Sigmoid colon (tissue), 7 donors: ENCODE measurements at regions of chrX and their contacts with region 1.

Region 1: GRCh38 chrX:40647307-40648197 is at the start of gene CXorf38:
- DNase-seq: peak; percentile 97
- H3K4me3 ChIP-seq: peak within 1 kb of the TSS; percentile 56 to 90 (median 78)
- H3K27ac ChIP-seq: peak within 1 kb of the TSS; percentile 82 to 89 (median 85)
- H3K4me1 ChIP-seq: peaks cover 0 to 46% (median 19%) of the 10 kb centered on the region in 4 donors
- H3K27me3 ChIP-seq: no peaks in the 10 kb centered on the region
- CTCF ChIP-seq: no peak
- EP300 ChIP-seq: peak in 1 of 4 donors; percentile 51
- POLR2A ChIP-seq: peak in 1 of 2 donors; percentile 40
- total RNA-seq, gene CXorf38: 9.2 to 11.4 (median 9.8) TPM

Region 2: GRCh38 chrX:40539214-40540142 is 108.1 kb before region 1 on chrX:
- intact Hi-C with region 1: loop called (anchors 10 kb)
- DNase-seq: peak; percentile 67
- H3K4me3 ChIP-seq: no peak overlapping the region
- H3K27ac ChIP-seq: peak overlapping the region in 1 of 4 donors; percentile 27
- H3K4me1 ChIP-seq: peaks cover 0 to 17% (median 5%) of the 10 kb centered on the region in 4 donors
- H3K27me3 ChIP-seq: no peaks in the 10 kb centered on the region
- CTCF ChIP-seq: no peak
- EP300 ChIP-seq: no peak
- POLR2A ChIP-seq: no peak

Region 3: DNA sequence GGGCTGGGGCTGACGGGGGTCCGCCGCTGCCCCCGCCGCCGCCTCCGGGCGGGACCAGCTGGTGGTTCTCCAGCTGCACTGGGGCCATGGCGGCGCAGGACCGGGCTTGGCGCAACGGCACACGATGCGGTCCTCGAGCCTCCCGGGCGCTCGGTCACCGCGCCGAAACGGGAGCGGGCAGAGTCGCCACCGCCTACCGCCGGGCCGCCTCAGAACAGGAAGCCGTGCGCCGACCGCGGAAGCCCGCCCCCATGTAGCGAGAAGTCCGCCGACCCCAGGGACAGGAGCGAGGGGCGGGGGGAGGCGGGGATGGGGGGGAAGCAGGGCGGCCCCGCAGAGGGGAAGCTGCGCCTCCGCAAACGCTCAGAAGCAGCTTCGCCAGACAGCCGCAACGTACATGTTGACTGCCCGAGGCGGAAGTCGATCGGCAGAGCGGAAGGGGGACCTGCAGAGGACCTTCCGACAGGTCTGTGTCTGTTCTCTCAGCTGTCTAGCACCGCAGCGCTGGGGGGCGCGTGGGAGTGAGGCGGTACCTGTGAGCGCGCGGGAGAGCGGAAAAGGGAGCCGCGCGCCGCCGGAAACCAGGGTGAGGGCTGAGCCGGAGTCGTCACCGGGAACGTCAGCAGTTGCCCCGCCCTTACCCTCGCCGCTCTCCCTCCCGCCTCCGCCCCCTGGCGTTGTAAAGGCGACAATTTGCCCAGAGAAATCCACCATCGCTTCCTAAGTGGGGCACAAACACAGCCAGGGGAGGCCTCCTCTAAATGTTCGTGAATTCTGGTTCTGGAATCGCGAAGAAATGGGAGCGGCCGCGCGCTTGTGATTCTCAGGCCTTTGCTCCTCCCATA is 88.0 kb after region 1 on chrX and contains the start of gene MED14:
- intact Hi-C with region 1: loop called (anchors 5 kb)
- DNase-seq: peak; percentile 92
- H3K4me3 ChIP-seq: peak within 1 kb of the TSS; percentile 70 to 87 (median 78)
- H3K27ac ChIP-seq: peak within 1 kb of the TSS; percentile 92 to 98 (median 94)
- H3K4me1 ChIP-seq: peaks cover 0 to 22% (median 18%) of the 10 kb centered on the region in 4 donors
- H3K27me3 ChIP-seq: no peaks in the 10 kb centered on the region
- CTCF ChIP-seq: peak; percentile 7 to 31 (median 28)
- EP300 ChIP-seq: no peak
- POLR2A ChIP-seq: peak in 1 of 2 donors; percentile 60
- total RNA-seq, gene MED14: 23.9 to 51.6 (median 28.3) TPM

Region 4: GRCh38 chrX:41084044-41084892 is 436.7 kb after region 1 on chrX:
- intact Hi-C with region 1: loop called (anchors 1 kb)
- DNase-seq: peak; percentile 100
- H3K4me3 ChIP-seq: peak overlapping the region; percentile 68 to 94 (median 78)
- H3K27ac ChIP-seq: peak overlapping the region; percentile 96 to 99 (median 97)
- H3K4me1 ChIP-seq: peaks cover 0 to 25% (median 7%) of the 10 kb centered on the region in 4 donors
- H3K27me3 ChIP-seq: no peaks in the 10 kb centered on the region
- CTCF ChIP-seq: no peak
- EP300 ChIP-seq: peak; percentile 30 to 85 (median 44)
- POLR2A ChIP-seq: peak; percentile 46 to 75

Region 5: DNA sequence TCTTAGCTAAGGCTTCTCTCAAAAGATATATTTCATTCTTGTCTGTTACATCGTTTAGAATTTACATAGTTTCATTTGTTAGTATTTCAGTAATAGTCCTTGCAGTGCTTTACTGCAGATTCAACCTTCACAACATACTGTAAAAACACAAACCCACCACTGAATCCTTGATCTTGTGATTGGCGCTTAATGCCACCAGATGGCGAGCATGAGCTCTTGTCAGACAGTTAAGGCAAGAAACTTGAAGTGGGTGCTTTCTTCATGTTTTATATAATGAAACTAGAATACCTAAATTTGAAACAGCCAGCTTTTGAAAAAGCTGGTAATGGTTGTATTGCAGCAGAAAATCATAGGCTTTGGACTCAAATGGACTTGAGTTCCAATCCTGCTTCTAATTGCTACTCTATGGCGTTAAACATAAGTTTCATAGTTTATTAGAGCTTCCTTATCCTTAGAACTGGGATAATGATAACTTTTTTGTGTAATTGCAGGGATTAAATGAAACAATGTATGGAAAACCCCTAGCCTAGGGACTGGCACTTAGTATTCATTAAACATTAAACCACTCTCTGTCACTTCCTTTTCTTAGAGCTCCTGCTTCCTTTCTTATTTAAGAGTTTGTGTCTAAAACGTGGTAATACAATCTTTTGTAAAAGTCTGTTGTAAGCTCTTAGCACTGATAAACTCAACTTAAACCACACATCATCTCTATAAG is 532.8 kb after region 1 on chrX:
- intact Hi-C with region 1: loop called (anchors 5 kb)
- DNase-seq: no peak
- H3K4me3 ChIP-seq: no peak overlapping the region
- H3K27ac ChIP-seq: no peak overlapping the region
- H3K4me1 ChIP-seq: peaks cover 0 to 7% (median 0%) of the 10 kb centered on the region in 4 donors
- H3K27me3 ChIP-seq: no peaks in the 10 kb centered on the region
- CTCF ChIP-seq: peak; percentile 8 to 47 (median 30)
- EP300 ChIP-seq: no peak
- POLR2A ChIP-seq: no peak

Region 6: DNA sequence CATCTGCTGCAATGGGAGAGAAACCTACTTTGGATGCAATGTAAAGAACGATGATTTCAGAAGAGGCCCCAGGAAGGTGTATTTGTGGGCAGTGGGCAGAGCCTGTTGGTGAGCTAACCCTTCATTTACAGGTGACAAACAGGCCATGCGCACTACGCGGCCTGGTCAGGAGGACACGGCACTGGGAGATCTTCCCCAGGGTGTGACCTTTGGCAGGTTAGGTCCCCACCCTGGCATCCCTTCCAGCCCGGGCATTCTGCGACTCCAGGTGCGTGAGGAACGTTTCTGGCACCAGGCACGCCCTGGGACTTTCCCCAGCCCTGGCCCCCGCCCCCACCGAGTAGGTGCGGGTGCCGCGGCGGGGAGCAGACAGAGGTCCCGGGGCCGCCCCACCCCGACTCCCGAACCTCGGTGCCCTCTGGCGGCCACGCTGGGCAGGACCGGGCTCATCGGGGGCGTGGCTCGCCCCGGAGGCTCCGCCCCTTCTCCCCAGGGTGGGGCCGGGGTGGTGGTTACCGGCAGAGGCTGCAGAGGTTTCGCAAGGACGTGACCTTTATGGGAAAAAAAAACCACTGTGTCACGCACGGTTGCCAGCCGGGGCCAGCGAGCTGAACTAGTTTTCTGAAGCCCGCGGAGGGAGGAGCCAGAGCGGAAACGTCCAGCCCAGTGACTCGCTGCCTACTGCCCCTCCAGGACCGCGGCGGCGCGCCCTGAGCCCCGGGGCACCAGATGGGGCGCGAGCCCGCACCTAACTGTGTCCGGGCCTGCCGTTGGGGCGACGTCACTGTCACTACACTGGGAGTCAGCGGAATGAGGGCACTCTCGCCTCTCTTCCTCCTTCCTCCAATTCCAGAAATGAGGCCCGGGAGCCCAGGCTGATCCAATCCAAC is 794.6 kb after region 1 on chrX:
- intact Hi-C with region 1: loop called (anchors 10 kb)
- DNase-seq: peak; percentile 91
- H3K4me3 ChIP-seq: peak overlapping the region; percentile 11 to 41 (median 39)
- H3K27ac ChIP-seq: peak overlapping the region; percentile 59 to 63 (median 61)
- H3K4me1 ChIP-seq: peaks cover 0 to 9% (median 0%) of the 10 kb centered on the region in 4 donors
- H3K27me3 ChIP-seq: no peaks in the 10 kb centered on the region
- CTCF ChIP-seq: peak; percentile 19 to 52 (median 42)
- EP300 ChIP-seq: peak in 2 of 4 donors; percentile 17 to 35
- POLR2A ChIP-seq: no peak